PC-3 (cell line): ENCODE measurements at regions of chr5 and their contacts with region 1.

Region 1: DNA sequence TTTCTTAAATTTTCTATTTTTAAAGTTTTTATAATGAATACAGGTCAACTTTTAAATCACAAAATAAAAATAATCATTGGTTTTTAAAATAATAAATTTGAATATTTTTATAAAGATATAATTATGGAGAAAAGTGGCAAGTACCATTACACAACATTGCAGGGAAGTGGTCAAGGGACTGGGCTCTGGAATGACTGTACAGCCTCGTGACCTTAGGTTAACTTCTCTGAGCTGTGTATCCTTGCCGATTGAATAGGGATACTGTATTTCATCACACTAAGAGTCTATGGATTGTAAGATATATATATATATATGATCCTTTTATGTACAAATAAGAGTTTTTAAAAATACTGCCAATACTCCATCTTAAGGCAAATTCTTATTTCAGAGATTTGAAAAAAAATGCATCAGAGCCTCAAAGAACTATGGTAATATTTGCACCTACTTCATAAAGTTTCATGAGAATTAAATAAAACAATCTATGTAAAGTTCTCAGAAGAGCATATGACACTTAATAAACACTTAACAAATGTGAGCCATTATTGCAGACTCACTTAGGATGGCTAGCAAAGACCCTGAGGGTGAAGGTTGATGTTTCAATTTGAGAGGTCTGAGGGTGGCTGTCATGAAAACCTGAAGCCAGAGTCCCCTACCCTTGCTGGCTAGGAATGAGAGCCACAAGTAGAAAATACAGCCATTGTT is 136.5 kb downstream of the CCDC192 start:
- DNase-seq: no peak
- ATAC-seq: no peak
- H3K4me3 ChIP-seq: no peak overlapping the region
- H3K27ac ChIP-seq: peak overlapping the region; percentile 31; the same call in 1 of the 2 replicates
- H3K4me1 ChIP-seq: peaks cover 23% of the 10 kb centered on the region
- H3K27me3 ChIP-seq: no peaks in the 10 kb centered on the region
- CTCF ChIP-seq: no peak

Region 2: DNA sequence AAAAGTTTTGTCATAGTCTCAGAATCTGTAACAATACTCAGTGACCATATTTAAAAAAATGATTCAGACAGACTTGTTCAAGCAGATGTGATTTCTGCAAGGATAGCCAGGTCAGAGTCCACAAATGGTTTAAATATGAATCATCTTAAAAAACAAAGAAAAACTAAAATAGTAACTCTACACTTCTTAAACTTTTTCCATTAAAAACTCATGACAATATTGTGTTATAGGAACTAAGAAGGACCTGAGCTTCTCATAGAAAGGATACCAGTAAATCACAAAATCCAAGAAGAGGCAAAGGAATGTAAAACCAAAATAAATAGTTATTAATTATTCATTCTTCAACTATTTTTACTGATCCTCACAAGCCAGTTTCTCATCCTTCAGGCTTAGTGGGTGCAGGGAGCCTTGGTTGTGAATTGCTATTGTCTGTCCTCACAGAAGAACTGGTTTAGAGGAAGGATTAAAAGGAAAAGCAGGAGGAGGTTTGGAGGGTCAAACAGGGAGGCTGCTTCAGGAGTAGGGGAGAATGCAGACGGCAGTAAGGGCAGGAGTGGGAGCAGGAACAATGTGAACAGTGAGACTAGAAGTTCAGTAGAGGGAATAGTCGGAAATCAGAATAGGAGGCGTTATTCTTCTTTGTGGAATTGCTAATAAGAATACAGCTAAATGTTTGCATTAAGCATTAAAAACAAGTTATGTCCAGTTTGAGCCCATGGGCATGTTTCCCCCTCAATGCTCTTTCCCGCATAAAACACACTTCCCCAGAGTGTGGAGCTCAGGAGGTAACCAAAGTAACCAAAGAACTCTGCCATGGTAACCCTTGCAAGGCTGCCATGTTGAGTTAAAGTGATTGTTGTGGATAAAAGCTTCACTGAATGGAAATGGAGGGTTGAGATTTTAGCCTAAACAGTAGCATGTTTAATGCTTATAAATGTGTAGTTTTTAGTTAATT is 25.7 kb before region 1 on chr5:
- CTCF ChIA-PET with region 1: no interaction called
- POLR2A ChIA-PET with region 1: no interaction called
- intact Hi-C with region 1: loop called (anchors 1 kb)
- DNase-seq: peak; percentile 83
- ATAC-seq: peak; percentile 90
- H3K4me3 ChIP-seq: peak overlapping the region; percentile 17; the same call in 1 of the 2 replicates
- H3K27ac ChIP-seq: peak overlapping the region; percentile 73
- H3K4me1 ChIP-seq: peaks cover 36% of the 10 kb centered on the region
- H3K27me3 ChIP-seq: no peaks in the 10 kb centered on the region
- CTCF ChIP-seq: no peak

Region 3: DNA sequence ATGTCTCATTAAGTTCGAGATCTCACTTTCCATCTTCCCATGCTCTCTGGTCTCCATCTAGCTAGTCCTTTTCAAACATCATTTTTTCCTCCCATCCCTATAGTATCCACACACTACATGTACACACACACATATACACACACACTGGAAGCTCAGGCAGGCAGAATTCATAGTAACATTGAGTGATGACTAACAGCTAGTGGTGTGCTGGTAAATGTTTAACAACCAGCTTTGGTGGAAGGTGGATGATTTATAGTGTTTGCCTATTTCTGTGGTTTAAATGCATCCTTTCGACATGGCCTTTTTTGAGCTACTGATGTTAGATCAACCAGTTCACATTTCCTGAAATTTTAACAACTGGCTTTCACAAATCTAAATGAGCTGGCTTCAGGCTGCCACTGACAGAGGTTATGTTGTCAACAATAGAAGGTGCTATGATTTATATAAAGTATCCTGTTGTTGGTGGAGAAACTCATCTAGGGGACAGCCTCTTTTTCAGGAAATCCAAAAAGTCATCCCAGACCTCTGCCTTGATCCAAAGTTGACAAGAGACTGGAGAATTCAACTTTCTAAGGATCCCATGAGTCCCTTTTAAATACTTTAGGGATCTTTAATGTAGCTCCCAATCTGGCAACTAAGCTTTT is 18.6 kb before region 1 on chr5:
- CTCF ChIA-PET with region 1: no interaction called
- POLR2A ChIA-PET with region 1: interaction called, 3 read pairs
- intact Hi-C with region 1: loop called (anchors 1 kb)
- DNase-seq: peak; percentile 92
- ATAC-seq: peak; percentile 98
- H3K4me3 ChIP-seq: no peak overlapping the region
- H3K27ac ChIP-seq: peak overlapping the region; percentile 32
- H3K4me1 ChIP-seq: peaks cover 11% of the 10 kb centered on the region
- H3K27me3 ChIP-seq: no peaks in the 10 kb centered on the region
- CTCF ChIP-seq: no peak

Region 4: DNA sequence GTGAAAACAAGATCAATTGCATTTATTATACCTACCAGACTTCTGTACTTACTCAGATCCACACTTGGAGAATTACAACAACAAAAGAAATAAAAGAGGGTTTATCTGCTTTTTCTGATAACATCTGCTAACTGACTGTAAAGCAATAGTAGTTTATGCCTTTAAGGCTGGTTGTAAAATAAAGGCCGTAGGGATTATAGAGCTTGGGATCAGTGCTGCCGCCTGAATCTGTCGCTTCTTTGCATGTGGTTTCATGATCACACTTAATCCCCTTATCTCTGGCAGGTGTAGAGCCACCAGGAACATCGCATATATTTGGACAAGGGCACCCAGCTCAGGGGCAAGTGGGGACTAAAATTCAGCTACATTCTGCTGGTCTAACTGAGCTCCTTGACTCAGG is 10.2 kb after region 1 on chr5:
- CTCF ChIA-PET with region 1: no interaction called
- POLR2A ChIA-PET with region 1: no interaction called
- intact Hi-C with region 1: loop called (anchors 1 kb)
- DNase-seq: no peak
- ATAC-seq: no peak; the same call in 1 of the 2 replicates
- H3K4me3 ChIP-seq: no peak overlapping the region
- H3K27ac ChIP-seq: peak overlapping the region; percentile 21
- H3K4me1 ChIP-seq: peaks cover 22% of the 10 kb centered on the region
- H3K27me3 ChIP-seq: no peaks in the 10 kb centered on the region
- CTCF ChIP-seq: no peak

Region 5: DNA sequence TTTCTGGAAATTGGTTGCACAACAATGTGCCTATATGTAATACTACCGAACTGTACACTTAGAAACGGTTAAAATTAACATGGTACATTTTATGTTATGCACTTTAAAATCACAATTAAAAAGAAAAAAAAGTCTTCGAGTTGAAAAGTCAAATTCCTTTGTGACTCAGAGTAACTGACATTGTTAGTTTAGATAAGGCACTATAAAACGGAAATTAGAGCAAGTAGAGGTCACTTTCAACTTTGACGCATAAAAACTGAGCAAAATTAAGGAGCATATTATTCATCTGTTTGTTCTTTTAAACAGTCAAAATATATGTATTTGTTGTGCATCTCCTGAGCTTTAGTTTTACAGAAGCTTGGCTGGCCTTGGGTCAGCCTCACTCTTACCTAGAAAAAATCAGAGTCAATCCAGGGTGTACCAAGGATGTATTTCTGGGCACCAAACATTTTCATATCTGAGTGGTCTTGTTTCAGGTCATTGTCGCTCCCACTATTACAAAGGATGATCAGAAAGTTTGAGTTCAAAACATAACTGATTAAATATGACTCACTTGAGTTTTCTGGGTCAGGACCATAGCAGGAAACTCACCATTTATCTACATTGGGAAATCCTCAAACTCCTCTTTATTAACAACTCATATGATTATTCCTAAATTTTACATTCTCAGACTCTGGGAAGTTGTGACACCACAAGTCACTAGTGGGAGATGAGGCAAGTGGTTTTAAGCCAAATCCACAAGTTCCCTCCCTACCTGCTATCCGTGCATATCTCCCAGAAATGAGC is 24.2 kb after region 1 on chr5:
- CTCF ChIA-PET with region 1: interaction called, 5 read pairs
- POLR2A ChIA-PET with region 1: no interaction called
- intact Hi-C with region 1: loop called (anchors 1 kb)
- DNase-seq: peak; percentile 67
- ATAC-seq: peak; percentile 70
- H3K4me3 ChIP-seq: no peak overlapping the region
- H3K27ac ChIP-seq: peak overlapping the region; percentile 68
- H3K4me1 ChIP-seq: peaks cover 18% of the 10 kb centered on the region
- H3K27me3 ChIP-seq: no peaks in the 10 kb centered on the region
- CTCF ChIP-seq: no peak

Region 6: GRCh38 chr5:127885176-127885575 is 45.5 kb after region 1 on chr5:
- CTCF ChIA-PET with region 1: no interaction called
- POLR2A ChIA-PET with region 1: no interaction called
- intact Hi-C with region 1: loop called (anchors 2 kb)
- DNase-seq: peak; percentile 49
- ATAC-seq: peak; percentile 97
- H3K4me3 ChIP-seq: no peak overlapping the region
- H3K27ac ChIP-seq: no peak overlapping the region
- H3K4me1 ChIP-seq: 0 out of 2 replicates have a peak, but pooled peaks cover 6% of the 10 kb centered on the region
- H3K27me3 ChIP-seq: no peaks in the 10 kb centered on the region
- CTCF ChIP-seq: no peak

Region 7: GRCh38 chr5:127934791-127935256 is 95.2 kb after region 1 on chr5:
- CTCF ChIA-PET with region 1: no interaction called
- POLR2A ChIA-PET with region 1: no interaction called
- intact Hi-C with region 1: loop called (anchors 1 kb)
- DNase-seq: peak; percentile 99
- ATAC-seq: peak; percentile 94
- H3K4me3 ChIP-seq: no peak overlapping the region
- H3K27ac ChIP-seq: peak overlapping the region; percentile 89
- H3K4me1 ChIP-seq: peaks cover 41% of the 10 kb centered on the region
- H3K27me3 ChIP-seq: no peaks in the 10 kb centered on the region
- CTCF ChIP-seq: peak; percentile 60

Region 8: GRCh38 chr5:128197896-128198522 is 358.4 kb after region 1 on chr5:
- CTCF ChIA-PET with region 1: no interaction called
- POLR2A ChIA-PET with region 1: no interaction called
- intact Hi-C with region 1: no loop called
- DNase-seq: no peak
- ATAC-seq: no peak
- H3K4me3 ChIP-seq: no peak overlapping the region
- H3K27ac ChIP-seq: no peak overlapping the region
- H3K4me1 ChIP-seq: peaks cover 33% of the 10 kb centered on the region
- H3K27me3 ChIP-seq: no peaks in the 10 kb centered on the region
- CTCF ChIP-seq: no peak